Activated naive CD4-positive, alpha-beta T cell treated with anti-CD3 and anti-CD28 coated beads for 36 hours (primary cell): ENCODE measurements at regions of chr12 and their contacts with region 1.

Region 1: DNA sequence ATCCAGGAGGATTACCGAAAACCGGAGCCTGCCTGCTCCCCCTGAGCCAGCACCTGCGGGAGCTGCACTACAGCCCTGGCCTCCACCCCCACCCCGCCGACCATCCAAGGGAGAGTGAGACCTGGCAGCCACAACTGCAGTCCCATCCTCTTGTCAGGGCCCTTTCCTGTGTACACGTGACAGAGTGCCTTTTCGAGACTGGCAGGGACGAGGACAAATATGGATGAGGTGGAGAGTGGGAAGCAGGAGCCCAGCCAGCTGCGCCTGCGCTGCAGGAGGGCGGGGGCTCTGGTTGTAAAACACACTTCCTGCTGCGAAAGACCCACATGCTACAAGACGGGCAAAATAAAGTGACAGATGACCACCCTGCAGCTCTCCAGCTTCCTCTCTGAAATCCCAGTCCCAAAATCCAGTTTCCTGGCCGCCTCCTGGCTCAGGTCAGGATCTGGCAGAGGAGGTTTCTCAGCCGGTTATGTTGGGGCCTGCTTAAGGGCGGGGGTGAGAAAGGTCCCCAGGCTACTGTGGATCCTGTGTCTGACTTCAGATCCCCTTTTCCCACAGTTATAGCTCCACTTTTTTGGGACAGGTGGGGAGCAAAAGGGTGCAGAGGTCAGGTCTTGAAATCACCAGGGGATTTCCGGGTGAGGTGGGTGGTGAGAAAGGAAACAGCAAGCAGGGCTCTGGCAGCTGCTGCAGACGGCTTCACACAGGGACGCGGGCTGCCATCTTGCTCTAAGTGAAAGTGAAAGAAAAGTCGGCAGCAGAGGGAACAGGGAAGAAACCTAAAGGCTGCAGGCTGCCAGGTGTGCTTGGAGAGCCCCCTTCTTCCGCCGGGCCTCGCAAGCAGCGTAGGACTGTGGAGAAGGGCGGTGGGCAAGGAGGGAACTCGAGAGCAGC is at the start of gene TAPBPL:
- DNase-seq: peak; percentile 93
- H3K4me3 Mint-ChIP-seq: peak within 1 kb of the TSS; percentile 98
- H3K27ac Mint-ChIP-seq: peak within 1 kb of the TSS; percentile 98
- H3K4me1 Mint-ChIP-seq: peaks cover 65% of the 10 kb centered on the region
- H3K27me3 Mint-ChIP-seq: no peaks in the 10 kb centered on the region
- total RNA-seq, gene TAPBPL: 27.9 to 28.0 TPM

Region 2: DNA sequence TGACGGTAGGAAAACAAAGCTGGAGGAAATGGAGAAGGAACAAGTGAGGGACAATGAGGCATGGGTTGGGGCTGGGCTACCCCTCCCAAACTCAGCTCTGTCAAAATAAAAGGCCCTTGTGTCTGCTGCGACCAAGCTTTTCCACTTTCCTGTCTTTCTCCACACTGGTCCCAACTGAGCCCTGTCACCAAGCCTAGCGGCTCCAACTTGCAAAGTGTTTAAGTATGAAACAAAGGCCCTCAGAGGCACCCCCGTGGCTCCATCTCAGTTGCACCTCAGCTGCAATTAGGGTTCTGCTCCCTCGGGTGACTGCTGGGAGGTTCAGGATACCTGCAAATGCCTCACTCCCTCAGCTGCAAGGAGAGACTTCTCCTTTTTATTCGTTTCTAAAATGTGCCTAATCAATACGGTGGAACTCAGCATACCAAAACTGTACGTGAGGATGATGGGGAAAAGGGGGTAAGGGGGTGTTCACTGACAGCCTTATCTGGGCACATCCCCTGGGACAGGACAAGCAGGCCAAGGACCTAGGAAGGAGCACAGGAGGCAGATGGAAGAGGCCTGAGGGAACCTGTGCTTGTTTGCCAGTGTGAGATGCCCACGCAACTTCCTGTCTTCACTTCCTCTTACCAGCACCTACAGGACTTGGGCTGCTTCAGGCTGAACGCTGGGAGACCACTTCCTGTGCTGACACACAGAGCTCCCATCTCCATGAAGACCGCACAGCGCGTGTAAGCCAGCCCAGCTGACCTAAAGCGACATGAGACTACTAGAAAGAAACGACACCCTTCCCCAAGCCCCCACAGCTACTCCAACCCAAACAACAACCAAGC is 10.0 kb after region 1 on chr12:
- CTCF ChIA-PET with region 1: interaction called, 159 read pairs
- intact Hi-C with region 1: loop called (anchors 1 kb)
- DNase-seq: peak; percentile 93
- H3K4me3 Mint-ChIP-seq: peak overlapping the region; percentile 80
- H3K27ac Mint-ChIP-seq: peak overlapping the region; percentile 97
- H3K4me1 Mint-ChIP-seq: peaks cover 89% of the 10 kb centered on the region
- H3K27me3 Mint-ChIP-seq: no peaks in the 10 kb centered on the region

Region 3: GRCh38 chr12:6470375-6471163 is 19.0 kb after region 1 on chr12 and contains the start of gene VAMP1:
- CTCF ChIA-PET with region 1: interaction called, 159 read pairs
- intact Hi-C with region 1: no loop called
- DNase-seq: peak; percentile 99
- H3K4me3 Mint-ChIP-seq: peak within 1 kb of the TSS; percentile 91
- H3K27ac Mint-ChIP-seq: peak within 1 kb of the TSS; percentile 90
- H3K4me1 Mint-ChIP-seq: peaks cover 53% of the 10 kb centered on the region
- H3K27me3 Mint-ChIP-seq: no peaks in the 10 kb centered on the region
- total RNA-seq, gene VAMP1: 31.9 to 33.5 TPM